ENCODE measurements at regions of chr6 and their contacts with region 1.

Region 1: GRCh38 chr6:122399384-122400158 is at the start of gene HSF2:
- DNase-seq: peak; percentile 99
- ATAC-seq: peak; percentile 98
- H3K4me3 ChIP-seq: peak within 1 kb of the TSS; percentile 94
- H3K27ac ChIP-seq: peak within 1 kb of the TSS; percentile 84
- H3K4me1 ChIP-seq: no peaks in the 10 kb centered on the region
- H3K27me3 ChIP-seq: no peaks in the 10 kb centered on the region
- CTCF ChIP-seq: peak; percentile 35; the same call in 1 of the 2 replicates
- POLR2A ChIP-seq: peak; percentile 68; the same call in 1 of the 2 replicates
- RAD21 ChIP-seq: no peak
- total RNA-seq, gene HSF2: 28.9 and 31.1 TPM in 2 replicates

Region 2: GRCh38 chr6:121382467-121383121 is 1017.0 kb before region 1 on chr6:
- CTCF ChIA-PET with region 1: no interaction called
- POLR2A ChIA-PET with region 1: no interaction called
- dilution Hi-C with region 1: no loop called
- in situ Hi-C with region 1: no loop called
- intact Hi-C with region 1: no loop called
- DNase-seq: no peak
- ATAC-seq: no peak
- H3K4me3 ChIP-seq: no peak overlapping the region
- H3K27ac ChIP-seq: no peak overlapping the region
- H3K4me1 ChIP-seq: no peaks in the 10 kb centered on the region
- H3K27me3 ChIP-seq: no peaks in the 10 kb centered on the region
- CTCF ChIP-seq: no peak
- POLR2A ChIP-seq: no peak
- RAD21 ChIP-seq: no peak

Region 3: GRCh38 chr6:122322824-122323223 is 76.7 kb before region 1 on chr6:
- CTCF ChIA-PET with region 1: no interaction called
- POLR2A ChIA-PET with region 1: no interaction called
- dilution Hi-C with region 1: no loop called
- in situ Hi-C with region 1: no loop called
- intact Hi-C with region 1: no loop called
- DNase-seq: peak; percentile 3
- ATAC-seq: peak; percentile 46
- H3K4me3 ChIP-seq: peak overlapping the region; percentile 76; the same call in 1 of the 2 replicates
- H3K27ac ChIP-seq: no peak overlapping the region
- H3K4me1 ChIP-seq: no peaks in the 10 kb centered on the region
- H3K27me3 ChIP-seq: no peaks in the 10 kb centered on the region
- CTCF ChIP-seq: no peak
- POLR2A ChIP-seq: no peak
- RAD21 ChIP-seq: no peak

Region 4: GRCh38 chr6:122438975-122439374 is 39.4 kb after region 1 on chr6:
- CTCF ChIA-PET with region 1: no interaction called
- POLR2A ChIA-PET with region 1: no interaction called
- dilution Hi-C with region 1: no loop called
- in situ Hi-C with region 1: no loop called
- intact Hi-C with region 1: loop called (anchors 5 kb)
- DNase-seq: no peak
- ATAC-seq: no peak
- H3K4me3 ChIP-seq: no peak overlapping the region
- H3K27ac ChIP-seq: no peak overlapping the region
- H3K4me1 ChIP-seq: 0 out of 2 replicates have a peak, but pooled peaks cover 2% of the 10 kb centered on the region
- H3K27me3 ChIP-seq: no peaks in the 10 kb centered on the region
- CTCF ChIP-seq: no peak
- POLR2A ChIP-seq: no peak
- RAD21 ChIP-seq: no peak

Region 5: DNA sequence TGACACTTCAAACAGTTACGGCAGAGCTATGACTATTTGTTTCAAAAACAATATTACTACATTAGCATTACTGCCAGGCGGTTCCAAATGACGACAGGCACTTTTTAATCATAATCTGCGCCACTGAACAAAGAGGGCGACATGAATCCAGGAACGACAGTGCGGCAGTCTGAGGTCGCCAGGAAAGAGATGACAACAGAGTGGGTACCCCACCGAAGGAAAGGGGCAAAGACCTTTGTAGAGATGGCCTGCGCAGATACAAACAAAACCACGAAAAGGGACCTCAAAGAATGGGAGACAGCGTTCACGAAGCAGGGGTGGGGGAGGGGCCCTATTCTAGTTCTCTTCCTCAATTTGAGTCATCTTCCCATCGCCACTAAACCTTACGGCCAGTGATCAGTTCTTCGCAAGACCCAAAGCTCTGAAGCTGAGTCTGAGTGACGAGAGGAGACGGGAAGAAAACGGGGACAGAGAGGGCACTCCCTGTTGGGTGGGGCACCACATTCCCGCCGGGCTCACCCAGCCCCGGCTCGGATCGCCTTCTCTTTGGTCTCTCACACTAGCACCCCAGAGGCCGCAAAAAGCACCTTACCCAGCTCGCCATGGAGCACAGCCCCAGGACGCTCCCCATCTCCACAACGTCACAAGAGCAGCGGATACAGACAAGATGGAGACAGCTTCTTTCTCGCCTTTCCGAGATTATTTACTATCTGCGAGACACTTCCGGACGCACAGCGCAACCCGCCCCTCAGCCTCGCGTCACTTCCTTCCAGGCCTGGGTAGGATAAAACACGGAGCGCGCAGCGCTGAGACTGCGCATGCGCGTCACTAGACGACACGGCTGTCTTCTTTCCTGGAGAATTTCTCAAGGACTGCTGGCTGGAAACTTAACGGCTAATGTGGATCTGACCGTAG is 71.8 kb after region 1 on chr6 and contains the start of gene SERINC1:
- CTCF ChIA-PET with region 1: no interaction called
- POLR2A ChIA-PET with region 1: no interaction called
- dilution Hi-C with region 1: no loop called
- in situ Hi-C with region 1: no loop called
- intact Hi-C with region 1: loop called (anchors 5 kb)
- DNase-seq: peak; percentile 95
- ATAC-seq: peak; percentile 91
- H3K4me3 ChIP-seq: peak within 1 kb of the TSS; percentile 81
- H3K27ac ChIP-seq: peak within 1 kb of the TSS; percentile 90
- H3K4me1 ChIP-seq: no peaks in the 10 kb centered on the region
- H3K27me3 ChIP-seq: no peaks in the 10 kb centered on the region
- CTCF ChIP-seq: no peak
- POLR2A ChIP-seq: peak; percentile 84
- RAD21 ChIP-seq: no peak
- total RNA-seq, gene SERINC1: 123 and 235 TPM in 2 replicates

Region 6: DNA sequence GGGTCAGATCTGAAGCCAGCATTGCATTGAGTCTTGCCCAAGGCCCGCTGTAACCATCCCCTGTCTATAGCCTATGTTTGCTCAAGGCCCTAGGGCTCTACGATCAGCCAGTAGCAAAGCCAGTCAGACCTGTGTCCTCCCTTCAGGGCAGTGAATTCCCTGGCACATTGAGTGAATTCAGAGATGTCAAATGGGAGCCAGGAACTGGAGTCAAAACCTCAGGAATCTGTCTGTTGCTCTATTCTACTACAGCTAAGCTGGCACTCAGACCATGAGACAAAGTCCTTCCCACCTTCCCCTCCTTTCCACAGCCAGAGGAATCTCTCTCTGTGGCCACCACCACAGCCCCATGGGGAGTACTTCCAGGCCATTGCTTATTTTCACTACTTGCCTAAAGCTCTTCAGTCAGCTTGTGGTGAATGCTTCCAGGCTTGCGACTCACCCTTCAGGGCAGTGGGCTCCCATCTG is 292.6 kb after region 1 on chr6:
- CTCF ChIA-PET with region 1: no interaction called
- POLR2A ChIA-PET with region 1: no interaction called
- dilution Hi-C with region 1: no loop called
- in situ Hi-C with region 1: no loop called
- intact Hi-C with region 1: no loop called
- DNase-seq: peak; percentile 75
- ATAC-seq: peak; percentile 55
- H3K4me3 ChIP-seq: no peak overlapping the region
- H3K27ac ChIP-seq: no peak overlapping the region; the same call in 1 of the 2 replicates
- H3K4me1 ChIP-seq: peaks cover 7% of the 10 kb centered on the region
- H3K27me3 ChIP-seq: no peaks in the 10 kb centered on the region
- CTCF ChIP-seq: no peak
- POLR2A ChIP-seq: no peak
- RAD21 ChIP-seq: no peak